A549 (cell line): ENCODE measurements at regions of chr2 and their contacts with region 1.

Region 1: GRCh38 chr2:8681786-8682692 is at the start of gene ID2:
- DNase-seq: peak; percentile 98 to 99
- ATAC-seq: peak; percentile 30 to 69
- H3K4me3 ChIP-seq: peak within 1 kb of the TSS; percentile 87
- H3K27ac ChIP-seq: peak within 1 kb of the TSS; percentile 97 to 99
- H3K4me1 ChIP-seq: peaks cover 11% of the 10 kb centered on the region
- CTCF ChIP-seq: no peak
- EP300 ChIP-seq: no peak
- POLR2A ChIP-seq: peak; percentile 100
- RAD21 ChIP-seq: peak; percentile 30 to 35; a peak in 2 of 5 replicates
- polyA plus RNA-seq, gene ID2: 177 and 228 TPM in 2 replicates

Region 2: GRCh38 chr2:8592751-8593150 is 89.3 kb before region 1 on chr2:
- CTCF ChIA-PET with region 1: interaction called, 5 read pairs
- POLR2A ChIA-PET with region 1: interaction called, 10 read pairs
- DNase-seq: no peak
- ATAC-seq: no peak
- H3K4me3 ChIP-seq: no peak overlapping the region
- H3K27ac ChIP-seq: no peak overlapping the region
- H3K4me1 ChIP-seq: peaks cover 10% of the 10 kb centered on the region
- CTCF ChIP-seq: no peak
- EP300 ChIP-seq: no peak
- POLR2A ChIP-seq: no peak
- RAD21 ChIP-seq: no peak

Region 3: GRCh38 chr2:8633735-8634313 is 48.2 kb before region 1 on chr2:
- CTCF ChIA-PET with region 1: interaction called, 13 read pairs
- POLR2A ChIA-PET with region 1: interaction called, 40 read pairs
- DNase-seq: peak; percentile 97 to 98
- ATAC-seq: peak; percentile 91 to 93
- H3K4me3 ChIP-seq: peak overlapping the region; percentile 11; the same call in 1 of the 3 replicates
- H3K27ac ChIP-seq: peak overlapping the region; percentile 92 to 94
- H3K4me1 ChIP-seq: peaks cover 77% of the 10 kb centered on the region
- CTCF ChIP-seq: no peak
- EP300 ChIP-seq: peak; percentile 98 to 99
- POLR2A ChIP-seq: no peak
- RAD21 ChIP-seq: peak; percentile 35 to 80; a peak in 4 of 5 replicates

Region 4: DNA sequence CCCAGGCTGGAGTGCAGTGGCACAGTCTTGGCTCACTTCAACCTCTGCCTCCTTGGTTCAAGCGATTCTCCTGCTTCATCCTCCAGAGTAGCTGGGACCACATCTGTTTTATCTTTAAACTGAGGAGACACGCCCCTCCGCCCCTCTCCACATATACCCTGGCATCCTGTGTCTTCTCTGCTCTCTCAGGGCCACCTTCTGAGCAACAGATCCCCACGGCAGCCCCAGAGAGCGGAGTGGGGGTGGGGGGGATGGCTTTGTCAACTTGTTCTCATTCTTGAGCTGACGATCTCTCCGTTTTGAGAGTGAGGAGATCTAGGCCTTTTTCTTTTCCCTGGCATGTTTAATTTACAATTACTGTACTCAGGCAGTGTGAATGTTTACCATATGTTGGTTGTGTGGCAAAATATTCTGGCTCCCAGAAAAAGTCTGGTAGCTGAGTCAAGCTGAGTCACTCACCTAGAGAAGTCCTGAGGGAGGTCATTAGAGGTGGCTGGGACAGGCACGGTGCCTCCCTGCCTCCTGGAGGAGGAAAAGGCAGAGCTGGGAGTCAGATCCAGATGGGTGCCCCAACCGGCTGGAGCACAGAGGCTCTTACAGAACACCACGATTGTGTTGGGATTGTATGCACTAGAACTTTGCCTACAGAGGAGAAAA is 19.7 kb before region 1 on chr2:
- CTCF ChIA-PET with region 1: interaction called, 15 read pairs
- POLR2A ChIA-PET with region 1: interaction called, 17 read pairs
- DNase-seq: peak; percentile 82 to 91
- ATAC-seq: peak; percentile 93 to 96
- H3K4me3 ChIP-seq: no peak overlapping the region
- H3K27ac ChIP-seq: peak overlapping the region; percentile 82 to 89
- H3K4me1 ChIP-seq: peaks cover 27% of the 10 kb centered on the region
- CTCF ChIP-seq: peak; percentile 34; the same call in 2 of the 3 replicates
- EP300 ChIP-seq: peak in 1 of 2 experiments; percentile 40; a peak in 1 of 5 replicates
- POLR2A ChIP-seq: no peak
- RAD21 ChIP-seq: peak; percentile 72 to 83

Region 5: DNA sequence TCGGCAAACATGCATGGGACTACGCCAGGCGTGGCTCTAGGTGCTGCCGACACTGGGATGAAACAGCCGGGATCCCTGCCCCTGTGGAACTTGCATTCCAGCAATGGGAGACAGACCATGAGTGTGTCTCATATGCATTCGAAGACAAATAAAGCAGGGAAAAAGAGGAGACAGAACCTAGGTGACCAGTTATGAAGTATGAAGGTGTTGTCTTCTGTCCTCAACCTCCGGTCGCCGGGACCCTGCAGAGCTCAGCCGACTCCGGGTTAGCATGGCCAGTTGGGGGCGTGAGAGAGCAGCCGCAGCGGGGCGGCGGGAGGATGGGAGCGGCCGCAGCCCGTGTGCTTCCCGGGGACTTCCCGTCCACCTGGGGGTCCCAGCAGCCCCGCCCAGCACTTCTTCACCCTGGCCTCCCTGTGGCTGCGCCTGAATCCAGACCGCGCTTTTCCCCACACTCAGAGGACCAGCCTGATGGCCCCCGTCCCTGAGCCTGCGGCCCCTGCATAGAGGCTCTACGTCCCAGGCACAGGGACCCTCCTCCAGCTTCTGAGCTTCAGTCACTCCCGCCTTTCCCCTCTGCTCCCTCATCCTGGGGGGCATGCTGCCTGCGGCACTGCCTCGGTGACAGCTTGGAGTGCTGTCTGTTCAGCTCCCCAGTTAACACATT is 11.2 kb after region 1 on chr2:
- CTCF ChIA-PET with region 1: interaction called, 22 read pairs
- POLR2A ChIA-PET with region 1: interaction called, 27 read pairs
- DNase-seq: peak; percentile 55 to 65
- ATAC-seq: peak; percentile 95 to 96
- H3K4me3 ChIP-seq: peak overlapping the region; percentile 43
- H3K27ac ChIP-seq: peak overlapping the region; percentile 60 to 86
- H3K4me1 ChIP-seq: peaks cover 10% of the 10 kb centered on the region; the same call in 1 of the 3 replicates
- CTCF ChIP-seq: peak; percentile 93
- EP300 ChIP-seq: no peak
- POLR2A ChIP-seq: no peak
- RAD21 ChIP-seq: peak; percentile 64 to 68